ENCODE measurements at regions of chr16 and their contacts with region 1.

Region 1: DNA sequence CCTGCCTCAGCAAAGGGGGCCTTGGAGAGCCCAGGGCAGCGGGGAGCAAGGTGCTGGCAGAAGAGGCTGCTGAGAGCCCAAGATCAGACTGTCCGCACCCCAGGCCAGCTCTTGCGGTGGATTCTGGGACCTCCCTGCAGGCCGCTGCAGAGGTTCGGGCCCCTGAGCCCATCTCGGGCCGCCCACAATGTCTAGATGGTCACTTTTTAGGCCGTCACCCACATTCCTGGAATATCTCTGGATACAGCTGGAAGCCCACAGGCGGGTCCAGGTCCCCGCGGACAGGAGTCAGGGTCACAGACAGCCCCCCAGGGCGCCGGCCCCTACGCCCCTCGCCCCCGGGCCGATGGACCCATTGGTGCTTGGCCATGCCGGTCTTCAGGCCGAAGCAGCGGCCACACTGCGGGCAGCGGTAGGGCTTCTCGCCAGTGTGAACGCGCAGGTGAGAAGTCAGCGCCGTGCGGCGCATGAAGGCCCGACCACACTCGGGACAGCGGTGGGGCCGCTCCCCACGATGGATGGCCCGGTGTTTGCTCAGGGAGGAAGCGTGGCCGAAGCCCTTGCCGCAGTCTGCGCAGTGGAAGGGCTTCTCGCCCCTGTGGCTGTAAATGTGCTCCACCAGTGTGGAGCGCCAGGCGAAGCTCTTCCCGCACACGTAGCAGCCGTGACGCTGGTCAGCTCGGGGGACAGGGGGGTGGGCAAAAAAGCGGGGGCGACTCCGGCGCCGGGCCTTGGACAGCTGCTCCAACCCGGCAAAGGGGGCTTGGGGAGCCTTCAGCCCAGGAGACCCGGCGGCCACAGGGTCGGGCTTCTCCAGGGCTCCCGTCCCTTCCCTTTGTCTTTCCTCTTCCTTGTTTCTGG is 2.1 kb downstream of the ZNF747 start:
- DNase-seq: no peak

Region 2: GRCh38 chr16:30567991-30568638 is 35.6 kb after region 1 on chr16:
- intact Hi-C with region 1: loop called in 1 of 2 experiments (anchors 1 kb)
- DNase-seq: no peak

Region 3: DNA sequence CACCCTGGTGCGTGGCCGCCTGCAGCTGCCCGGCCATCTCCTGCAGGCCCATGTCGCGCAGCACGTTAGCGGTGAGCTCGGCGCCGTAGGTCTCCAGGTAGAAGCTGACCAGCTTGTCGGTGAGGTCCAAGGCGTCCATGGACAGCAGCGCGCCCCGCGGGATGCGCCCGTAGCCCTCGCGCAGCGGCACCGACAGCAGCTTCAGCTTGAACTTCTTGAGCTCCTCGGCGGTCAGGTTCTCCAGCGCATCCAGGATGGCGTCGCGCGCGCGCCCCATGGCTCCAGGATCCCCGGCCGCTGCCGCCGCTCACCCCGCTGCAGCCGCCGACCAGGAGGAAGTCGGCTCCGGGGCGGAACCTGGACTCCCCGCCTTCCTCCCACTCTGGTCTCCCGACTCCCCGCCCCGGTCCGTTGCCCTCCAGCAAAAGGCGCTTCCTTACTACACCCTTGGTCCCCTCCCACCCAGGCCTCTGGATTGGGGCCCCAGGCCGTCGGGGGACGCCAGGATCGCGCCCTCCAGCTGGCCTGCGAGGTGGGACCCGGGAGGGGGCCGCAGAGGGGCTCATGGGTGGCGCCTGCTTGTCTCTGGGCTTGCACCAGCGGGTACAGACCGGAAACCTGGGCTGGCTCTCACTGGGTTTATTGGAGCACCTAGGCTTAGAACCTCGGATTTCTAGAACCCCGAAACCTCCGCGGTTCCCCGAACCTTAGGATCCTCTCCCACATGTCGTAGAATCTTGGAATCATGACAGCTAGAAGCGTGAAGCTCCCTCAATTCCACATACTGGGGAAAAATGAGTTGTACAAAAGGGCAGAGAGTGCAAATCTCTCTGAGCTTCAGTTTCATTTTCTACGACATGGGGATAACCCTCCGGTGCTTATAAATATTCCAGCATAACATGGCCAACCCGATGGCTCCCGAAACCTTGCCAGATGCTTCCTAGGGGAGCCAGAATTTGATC is 670.2 kb after region 1 on chr16 and contains the start of gene PYCARD:
- intact Hi-C with region 1: no loop called
- DNase-seq: peak; percentile 90
- total RNA-seq, gene PYCARD: 13.0 to 23.9 TPM

Measured in posterior vena cava (tissue), 2 donors.